Heart right ventricle (tissue), 16 donors: ENCODE measurements at regions of chr18 and their contacts with region 1.

Region 1: GRCh38 chr18:21704603-21705364 is at the start of gene ABHD3:
- DNase-seq: peak; percentile 92 to 95
- ATAC-seq: peak; percentile 99 to 100 (median 100)
- H3K4me3 ChIP-seq: peak within 1 kb of the TSS; percentile 64 to 96 (median 84)
- H3K27ac ChIP-seq: peak within 1 kb of the TSS in 9 of 10 donors; percentile 85 to 95 (median 89)
- H3K4me1 ChIP-seq: peaks cover 0 to 24% (median 13%) of the 10 kb centered on the region in 9 donors
- H3K27me3 ChIP-seq: no peaks in the 10 kb centered on the region
- CTCF ChIP-seq: peak; percentile 24 to 70 (median 42)
- total RNA-seq, gene ABHD3: 2.2 to 7.7 (median 3.7) TPM

Region 2: DNA sequence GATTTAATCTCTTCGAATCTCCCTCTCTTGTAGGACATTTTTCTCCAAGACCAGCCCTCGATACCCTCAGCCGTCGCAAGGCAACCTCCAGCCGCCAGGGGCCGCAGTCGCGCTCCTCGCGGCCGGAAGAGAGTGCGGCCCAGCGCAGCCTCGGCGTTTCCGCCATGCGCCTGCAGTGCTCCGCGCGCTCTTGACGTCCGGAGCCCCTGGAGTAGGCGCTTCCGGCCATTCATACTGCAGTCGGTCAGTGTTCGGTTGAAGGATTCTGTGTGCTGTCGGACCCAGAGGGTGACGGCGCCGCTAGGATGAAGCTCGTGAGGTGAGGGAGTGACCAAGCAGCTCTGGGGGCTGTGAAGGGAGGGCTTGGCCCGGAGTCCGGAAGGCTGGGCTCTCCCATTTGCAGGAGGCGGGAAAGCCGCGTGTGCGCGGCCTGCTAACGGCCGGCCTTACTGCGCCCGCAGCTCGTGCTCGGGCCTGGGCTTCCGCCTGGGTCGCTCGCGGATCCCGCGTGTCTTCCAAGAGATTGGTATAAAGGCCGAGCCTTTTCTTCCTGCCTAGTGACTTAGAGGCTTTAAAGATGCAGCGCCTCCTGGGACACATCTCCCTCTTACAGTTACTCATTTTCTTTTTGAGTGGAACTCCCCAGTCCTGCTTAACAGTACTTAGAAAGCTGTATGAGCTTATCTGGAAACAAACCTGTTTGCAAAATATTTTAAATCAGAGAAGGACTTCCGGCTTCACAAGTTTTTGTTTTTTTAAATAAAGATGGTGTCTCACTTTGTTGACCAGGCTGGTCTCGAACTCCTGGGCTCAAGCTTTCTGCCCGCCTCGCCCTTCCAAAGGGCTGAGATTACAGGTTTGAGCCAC is 92.4 kb before region 1 on chr18 and contains the start of gene SNRPD1:
- intact Hi-C with region 1: loop called in 2 of 10 experiments (anchors 10 kb)
- DNase-seq: peak; percentile 87 to 90
- ATAC-seq: peak; percentile 99 to 100 (median 99)
- H3K4me3 ChIP-seq: peak within 1 kb of the TSS; percentile 58 to 97 (median 77)
- H3K27ac ChIP-seq: peak within 1 kb of the TSS; percentile 16 to 93 (median 82)
- H3K4me1 ChIP-seq: peaks cover 3 to 23% (median 20%) of the 10 kb centered on the region in 9 donors
- H3K27me3 ChIP-seq: no peaks in the 10 kb centered on the region
- CTCF ChIP-seq: peak; percentile 88 to 99 (median 95)
- total RNA-seq, gene SNRPD1: 13.8 to 36.3 (median 19.1) TPM

Region 3: DNA sequence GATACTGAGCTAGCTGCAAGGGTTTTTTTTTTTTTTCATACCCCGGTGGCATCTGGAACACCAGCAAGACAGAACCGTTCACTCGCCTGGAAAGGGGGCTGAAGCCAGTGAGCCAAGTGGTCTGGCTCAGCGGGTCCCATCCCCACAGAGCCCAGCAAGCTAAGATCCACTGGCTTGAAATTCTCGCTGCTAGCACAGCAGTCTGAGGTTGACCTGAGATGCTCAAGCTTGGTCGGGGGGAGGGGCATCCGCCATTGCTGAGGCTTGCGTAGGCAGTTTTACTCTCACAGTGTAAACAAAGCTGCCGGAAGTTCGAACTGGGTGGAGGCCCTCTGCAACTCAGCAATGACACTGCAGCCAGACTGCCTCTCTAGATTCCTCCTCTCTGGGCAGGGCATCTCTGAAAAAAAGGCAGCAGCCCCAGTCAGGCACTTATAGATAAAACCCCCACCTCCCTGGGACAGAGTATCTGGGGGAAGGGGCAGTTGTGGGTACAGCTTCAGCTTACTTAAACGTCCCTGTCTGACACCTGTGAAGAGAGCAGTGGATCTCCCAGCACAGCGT is 30.8 kb after region 1 on chr18:
- intact Hi-C with region 1: loop called in 4 of 10 experiments (anchors 1 to 5 kb)
- DNase-seq: peak in 1 of 2 donors; percentile 24
- ATAC-seq: no peak
- H3K4me3 ChIP-seq: no peak overlapping the region
- H3K27ac ChIP-seq: peak overlapping the region in 2 of 10 donors; percentile 23 to 36
- H3K4me1 ChIP-seq: peaks cover 0 to 10% (median 7%) of the 10 kb centered on the region in 9 donors
- H3K27me3 ChIP-seq: no peaks in the 10 kb centered on the region
- CTCF ChIP-seq: no peak

Region 4: GRCh38 chr18:21760321-21760720 is 55.5 kb after region 1 on chr18:
- intact Hi-C with region 1: loop called in 1 of 10 experiments (anchors 10 kb)
- DNase-seq: no peak
- ATAC-seq: no peak
- H3K4me3 ChIP-seq: no peak overlapping the region
- H3K27ac ChIP-seq: no peak overlapping the region
- H3K4me1 ChIP-seq: peaks cover 0 to 45% (median 28%) of the 10 kb centered on the region in 9 donors
- H3K27me3 ChIP-seq: no peaks in the 10 kb centered on the region
- CTCF ChIP-seq: no peak

Region 5: DNA sequence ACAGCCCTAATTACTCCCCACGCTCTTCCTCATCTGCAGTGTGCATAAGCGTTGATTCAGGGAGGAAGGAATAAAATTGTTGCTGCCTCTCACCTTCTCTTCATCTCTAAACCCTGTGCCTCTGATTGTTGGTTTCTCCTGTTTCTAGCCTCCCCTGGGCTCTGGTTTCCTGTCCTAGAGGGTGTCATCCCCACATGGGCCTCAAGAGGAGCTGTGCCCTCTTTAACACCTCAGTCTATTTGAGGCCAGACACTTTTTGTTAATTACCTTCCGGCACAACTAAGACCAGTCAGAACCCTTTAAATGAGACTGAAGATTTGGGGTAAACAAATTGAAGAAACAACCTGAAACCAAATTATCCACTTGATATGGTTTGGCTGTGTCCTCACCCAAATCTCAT is 703.3 kb after region 1 on chr18:
- intact Hi-C with region 1: no loop called
- DNase-seq: no peak
- ATAC-seq: no peak
- H3K4me3 ChIP-seq: no peak overlapping the region
- H3K27ac ChIP-seq: no peak overlapping the region
- H3K4me1 ChIP-seq: peaks cover 0 to 13% (median 5%) of the 10 kb centered on the region in 9 donors
- H3K27me3 ChIP-seq: no peaks in the 10 kb centered on the region
- CTCF ChIP-seq: no peak

Region 6: GRCh38 chr18:22999212-22999611 is 1294.4 kb after region 1 on chr18:
- intact Hi-C with region 1: no loop called
- DNase-seq: no peak
- ATAC-seq: no peak
- H3K4me3 ChIP-seq: no peak overlapping the region
- H3K27ac ChIP-seq: no peak overlapping the region
- H3K4me1 ChIP-seq: no peaks in the 10 kb centered on the region
- H3K27me3 ChIP-seq: no peaks in the 10 kb centered on the region
- CTCF ChIP-seq: no peak